ENCODE measurements at regions of chr2 and their contacts with region 1.

Region 1: GRCh38 chr2:122100346-122100745 is 344.9 kb downstream of the TSN start:
- DNase-seq: no peak
- ATAC-seq: no peak

Region 2: DNA sequence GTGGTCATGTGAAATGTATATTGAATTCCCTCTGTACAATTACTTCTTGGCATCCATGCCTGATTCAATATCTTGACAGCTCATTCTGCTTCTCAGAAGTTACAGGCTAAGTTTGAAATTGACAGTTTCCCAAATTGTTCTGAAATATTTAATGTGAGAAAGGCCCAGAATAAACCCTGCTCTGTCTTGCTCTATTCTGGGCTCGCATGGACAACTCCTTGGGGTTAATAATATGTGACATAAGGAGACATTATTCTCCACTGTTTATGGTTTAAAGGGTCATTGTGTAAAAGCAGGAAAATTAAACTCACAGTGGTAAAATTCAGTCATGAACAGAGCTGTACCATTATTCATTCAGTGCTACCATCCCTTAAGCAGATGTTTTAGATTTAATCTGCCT is 1764.1 kb after region 1 on chr2:
- intact Hi-C with region 1: loop called (anchors 5 kb)
- DNase-seq: no peak
- ATAC-seq: no peak